Ovary (tissue), 10 donors: ENCODE measurements at regions of chr1 and their contacts with region 1.

Region 1: DNA sequence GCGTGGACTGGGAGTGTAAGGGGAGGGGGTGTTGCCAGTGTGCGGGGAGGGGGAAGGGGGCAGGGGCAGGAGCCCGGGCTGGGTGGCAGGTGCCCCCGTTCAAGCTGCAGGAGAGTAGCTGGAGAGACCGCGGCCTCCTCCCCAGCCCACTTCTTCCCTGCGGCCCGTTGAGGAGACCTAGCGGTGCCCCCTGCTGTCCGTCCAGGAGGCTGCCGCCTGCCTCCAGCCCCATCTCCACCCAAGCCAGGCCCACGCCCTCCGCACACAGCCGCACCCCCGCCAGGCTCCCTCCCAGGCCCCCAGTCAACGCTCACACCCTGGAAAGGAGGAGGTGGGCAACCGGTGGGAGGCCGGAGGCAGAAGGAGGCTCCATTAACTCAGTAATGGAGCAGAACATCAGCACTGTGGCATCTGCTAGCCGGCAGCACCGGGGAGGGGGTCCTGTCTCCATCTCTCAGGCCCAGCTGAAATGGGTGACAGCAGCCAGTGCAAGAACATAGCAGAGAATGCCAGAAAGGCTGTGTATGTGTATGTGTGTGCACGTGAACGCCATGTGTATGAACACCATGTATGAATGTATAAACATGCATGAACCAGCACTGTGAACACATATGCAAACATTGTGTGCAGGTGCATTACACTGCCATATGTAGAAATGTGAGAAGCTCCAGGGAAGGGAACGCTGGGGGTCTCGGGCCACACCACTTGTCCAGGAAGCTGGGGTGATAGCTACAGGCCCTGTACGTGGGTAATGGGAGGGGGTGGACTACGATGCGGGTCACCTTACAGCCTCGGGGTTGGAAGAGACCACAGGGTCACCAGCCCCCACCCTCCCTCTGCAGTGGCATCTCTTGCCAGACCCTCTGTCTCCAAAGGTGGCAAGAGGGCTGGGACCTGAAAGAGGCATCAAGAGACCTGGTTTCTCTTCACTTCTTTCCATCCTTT is 84.6 kb downstream of the SYT2 start:
- DNase-seq: peak; percentile 69 to 86 (median 76)
- H3K4me3 ChIP-seq: no peak overlapping the region
- H3K27ac ChIP-seq: no peak overlapping the region
- H3K4me1 ChIP-seq: peaks cover 9% of the 10 kb centered on the region
- H3K27me3 ChIP-seq: no peaks in the 10 kb centered on the region
- CTCF ChIP-seq: peak; percentile 53 to 59 (median 53)
- EP300 ChIP-seq: no peak
- POLR2A ChIP-seq: no peak

Region 2: DNA sequence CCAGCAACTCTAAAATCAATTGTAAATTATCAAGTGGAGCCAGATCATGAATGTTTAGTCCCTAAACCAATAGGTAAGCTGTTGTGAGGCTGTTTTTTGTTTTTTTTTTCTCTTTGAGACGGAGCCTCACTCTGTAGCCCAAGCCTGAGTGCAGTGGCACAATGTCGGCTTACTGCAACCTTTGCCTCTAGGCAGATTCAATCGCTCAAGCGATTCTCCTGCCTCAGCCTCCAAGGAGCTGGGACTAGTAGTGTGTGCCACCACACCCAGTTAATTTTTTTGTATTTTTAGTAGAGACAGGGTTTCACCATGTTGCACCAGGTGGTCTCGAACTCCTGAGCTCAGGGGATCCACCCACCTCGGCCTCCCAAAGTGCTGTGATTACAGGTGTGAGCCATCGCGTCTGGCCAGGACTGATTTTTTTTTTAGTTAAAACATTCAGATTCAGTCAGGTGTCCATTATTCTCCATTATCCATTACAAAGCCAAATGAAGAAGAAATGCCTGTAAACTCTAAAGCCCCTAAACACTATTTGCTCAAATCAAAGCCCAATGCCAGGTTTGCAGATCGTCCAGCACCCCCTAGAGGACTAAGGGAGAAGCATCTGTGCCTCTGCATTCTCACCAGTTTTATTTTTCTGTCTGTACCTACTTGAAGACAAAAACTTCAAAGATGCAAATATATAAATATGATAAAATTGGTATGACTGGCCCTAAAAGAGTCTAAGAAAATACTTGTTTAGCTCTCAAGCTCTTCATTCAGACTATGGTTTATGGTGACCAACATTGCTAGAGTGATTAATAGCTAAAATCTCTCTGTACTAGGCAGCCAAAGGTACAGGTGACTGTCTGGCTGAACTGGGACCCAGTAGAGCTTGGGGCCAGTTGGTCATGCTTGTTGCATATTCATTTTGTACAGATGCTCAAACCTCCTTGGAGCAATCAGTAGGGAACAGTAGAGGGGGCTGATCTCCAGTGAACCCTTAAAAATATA is 54.0 kb before region 1 on chr1:
- intact Hi-C with region 1: loop called in 1 of 4 experiments (anchors 10 kb)
- DNase-seq: no peak
- H3K4me3 ChIP-seq: no peak overlapping the region
- H3K27ac ChIP-seq: no peak overlapping the region
- H3K4me1 ChIP-seq: peaks cover 22% of the 10 kb centered on the region
- H3K27me3 ChIP-seq: no peaks in the 10 kb centered on the region
- CTCF ChIP-seq: peak; percentile 51 to 65 (median 65)
- EP300 ChIP-seq: no peak
- POLR2A ChIP-seq: no peak

Region 3: GRCh38 chr1:202852163-202852904 is 226.6 kb after region 1 on chr1:
- intact Hi-C with region 1: no loop called
- DNase-seq: no peak
- H3K4me3 ChIP-seq: no peak overlapping the region
- H3K27ac ChIP-seq: no peak overlapping the region
- H3K4me1 ChIP-seq: no peaks in the 10 kb centered on the region
- H3K27me3 ChIP-seq: no peaks in the 10 kb centered on the region
- CTCF ChIP-seq: no peak
- EP300 ChIP-seq: no peak
- POLR2A ChIP-seq: no peak